Thyroid gland (tissue), 4 donors: ENCODE measurements at regions of chr14 and their contacts with region 1.

Region 1: GRCh38 chr14:105075379-105076295 is 10.4 kb upstream of the GPR132 start:
- DNase-seq: peak; percentile 75 to 81
- H3K4me3 ChIP-seq: no peak overlapping the region
- H3K27ac ChIP-seq: peak overlapping the region in 2 of 3 donors; percentile 52 to 77
- H3K4me1 ChIP-seq: peaks cover 13 to 55% of the 10 kb centered on the region in 2 donors
- H3K27me3 ChIP-seq: no peaks in the 10 kb centered on the region
- CTCF ChIP-seq: no peak
- POLR2A ChIP-seq: no peak

Region 2: DNA sequence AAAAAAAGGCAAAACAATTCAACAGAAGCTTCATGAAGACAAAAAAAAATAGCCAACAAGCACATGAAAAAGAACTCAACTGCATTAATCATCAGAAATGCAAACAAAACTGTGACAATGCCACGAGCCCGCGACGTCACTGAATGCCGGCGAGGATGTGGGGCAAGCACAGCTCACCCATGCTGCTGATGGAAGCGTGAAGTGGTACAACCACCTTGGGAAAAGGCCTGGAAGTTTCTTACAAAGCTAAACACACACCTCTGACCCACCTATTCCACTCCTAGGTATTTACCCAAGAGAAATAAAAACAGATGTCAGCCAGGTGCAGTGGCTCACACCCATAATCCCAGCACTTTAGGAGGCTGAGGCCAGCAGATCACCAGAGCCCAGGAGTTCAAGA is 183.2 kb after region 1 on chr14:
- intact Hi-C with region 1: no loop called
- DNase-seq: no peak
- H3K4me3 ChIP-seq: no peak overlapping the region
- H3K27ac ChIP-seq: no peak overlapping the region
- H3K4me1 ChIP-seq: peaks cover 13 to 21% of the 10 kb centered on the region in 2 donors
- H3K27me3 ChIP-seq: no peaks in the 10 kb centered on the region
- CTCF ChIP-seq: no peak
- POLR2A ChIP-seq: no peak

Region 3: DNA sequence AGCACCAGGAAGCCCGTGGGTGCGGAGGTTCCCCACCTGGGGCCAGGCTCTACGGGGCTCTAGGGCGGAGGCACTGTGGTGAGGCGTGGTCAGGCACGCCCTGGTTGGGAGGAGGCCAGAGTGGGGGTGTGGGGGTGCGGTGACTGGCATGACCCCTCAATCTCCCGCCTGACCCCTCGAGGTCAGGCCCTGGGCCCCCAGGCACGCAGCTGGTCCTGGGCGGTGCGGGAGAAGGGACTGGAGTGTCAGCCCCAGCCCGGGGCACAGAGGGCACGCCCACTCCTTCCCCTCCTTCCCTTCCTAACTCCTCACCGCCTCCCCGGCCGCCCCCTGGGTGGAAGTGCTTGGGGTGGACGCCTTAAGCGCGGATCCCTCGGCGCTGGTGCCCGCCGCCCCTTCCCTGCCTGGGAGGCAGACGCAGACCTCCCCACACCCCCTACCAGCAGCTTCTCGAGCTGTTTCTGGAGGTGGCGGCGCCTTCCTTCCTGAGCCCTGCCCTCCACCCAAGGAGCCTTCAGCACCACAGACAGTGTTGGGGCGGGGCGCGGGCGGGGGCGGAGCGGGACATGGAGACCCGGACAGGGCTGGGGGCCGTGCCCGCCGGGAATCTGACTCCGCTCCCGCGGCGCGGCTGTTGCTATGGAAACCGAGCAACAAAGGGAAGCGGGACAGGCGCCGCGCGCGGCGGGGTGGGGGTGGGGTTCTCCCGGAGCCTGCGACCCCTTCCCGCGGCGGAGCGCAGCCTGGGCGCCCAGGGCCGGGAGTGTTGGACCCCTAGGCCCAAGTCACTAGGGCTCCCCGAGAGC is 398.2 kb after region 1 on chr14:
- intact Hi-C with region 1: loop called (anchors 10 kb)
- DNase-seq: peak; percentile 97 to 99
- H3K4me3 ChIP-seq: peak overlapping the region in 1 of 3 donors; percentile 52
- H3K27ac ChIP-seq: peak overlapping the region; percentile 67 to 87 (median 83)
- H3K4me1 ChIP-seq: peaks cover 65 to 66% of the 10 kb centered on the region in 2 donors
- H3K27me3 ChIP-seq: no peaks in the 10 kb centered on the region
- CTCF ChIP-seq: no peak
- POLR2A ChIP-seq: peak in 1 of 2 donors; percentile 7